MCF 10A (cell line): ENCODE measurements at regions of chr18 and their contacts with region 1.

Region 1: DNA sequence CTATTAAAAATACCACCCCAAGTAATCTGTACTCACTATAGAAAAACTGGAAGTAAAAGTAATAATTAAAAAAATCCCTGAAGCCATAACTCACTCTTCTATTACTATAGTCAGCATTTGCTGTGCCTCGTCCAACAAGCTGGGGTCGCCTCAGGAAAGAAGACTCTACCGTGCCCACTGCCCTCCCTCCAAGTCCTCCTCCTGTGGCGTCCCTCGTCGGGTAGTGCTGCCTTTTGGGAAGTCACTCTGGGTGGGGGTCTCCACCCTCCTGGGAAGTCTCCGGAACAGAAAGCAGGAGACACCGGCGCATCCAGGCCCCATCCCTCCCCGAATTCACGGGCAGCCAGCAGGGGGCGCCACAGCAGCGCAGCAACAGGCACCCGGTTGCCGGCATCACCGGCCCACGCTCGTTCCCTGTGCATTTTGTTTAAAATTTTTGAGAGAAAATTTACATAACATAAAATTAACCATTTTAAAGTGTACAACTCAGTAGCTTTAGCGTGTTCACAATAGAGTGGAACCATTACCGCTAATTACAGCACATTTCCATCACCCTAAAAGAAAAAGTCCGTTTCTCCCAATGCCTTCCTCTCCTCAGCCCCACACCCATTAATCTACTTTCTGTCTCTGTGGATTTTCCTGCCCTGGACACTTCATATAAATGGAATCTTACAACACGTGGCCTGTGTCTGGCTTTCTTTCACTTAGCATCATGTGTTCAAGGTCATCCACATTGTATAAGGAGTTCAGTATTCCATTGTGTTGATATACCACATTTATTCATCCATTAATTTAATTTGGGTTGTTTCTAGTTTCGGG is 62.2 kb downstream of the ADNP2 start:
- DNase-seq: peak; percentile 54
- H3K4me3 Mint-ChIP-seq: peak overlapping the region; percentile 5
- H3K27ac Mint-ChIP-seq: peak overlapping the region; percentile 23
- H3K4me1 Mint-ChIP-seq: peaks cover 21% of the 10 kb centered on the region
- H3K27me3 Mint-ChIP-seq: no peaks in the 10 kb centered on the region
- CTCF ChIP-seq: peak; percentile 95

Region 2: GRCh38 chr18:80096032-80096565 is 75.2 kb before region 1 on chr18:
- CTCF ChIA-PET with region 1: no interaction called
- POLR2A ChIA-PET with region 1: no interaction called
- intact Hi-C with region 1: no loop called
- DNase-seq: no peak
- H3K4me3 Mint-ChIP-seq: no peak overlapping the region
- H3K27ac Mint-ChIP-seq: no peak overlapping the region
- H3K4me1 Mint-ChIP-seq: no peaks in the 10 kb centered on the region
- H3K27me3 Mint-ChIP-seq: no peaks in the 10 kb centered on the region
- CTCF ChIP-seq: no peak

Region 3: GRCh38 chr18:80239830-80240229 is 68.6 kb after region 1 on chr18:
- CTCF ChIA-PET with region 1: interaction called, 16 read pairs
- POLR2A ChIA-PET with region 1: interaction called, 6 read pairs
- intact Hi-C with region 1: no loop called
- DNase-seq: no peak
- H3K4me3 Mint-ChIP-seq: no peak overlapping the region
- H3K27ac Mint-ChIP-seq: no peak overlapping the region
- H3K4me1 Mint-ChIP-seq: peaks cover 11% of the 10 kb centered on the region
- H3K27me3 Mint-ChIP-seq: no peaks in the 10 kb centered on the region
- CTCF ChIP-seq: no peak

Region 4: GRCh38 chr18:80245781-80246444 is 74.7 kb after region 1 on chr18:
- CTCF ChIA-PET with region 1: interaction called, 31 read pairs
- POLR2A ChIA-PET with region 1: interaction called, 6 read pairs
- intact Hi-C with region 1: no loop called
- DNase-seq: peak; percentile 51
- H3K4me3 Mint-ChIP-seq: peak overlapping the region; percentile 74
- H3K27ac Mint-ChIP-seq: no peak overlapping the region
- H3K4me1 Mint-ChIP-seq: peaks cover 27% of the 10 kb centered on the region
- H3K27me3 Mint-ChIP-seq: no peaks in the 10 kb centered on the region
- CTCF ChIP-seq: no peak

Region 5: GRCh38 chr18:80253871-80254492 is 82.7 kb after region 1 on chr18:
- CTCF ChIA-PET with region 1: interaction called, 48 read pairs
- POLR2A ChIA-PET with region 1: interaction called, 4 read pairs
- intact Hi-C with region 1: loop called (anchors 1 kb)
- DNase-seq: peak; percentile 35
- H3K4me3 Mint-ChIP-seq: no peak overlapping the region
- H3K27ac Mint-ChIP-seq: no peak overlapping the region
- H3K4me1 Mint-ChIP-seq: peaks cover 27% of the 10 kb centered on the region
- H3K27me3 Mint-ChIP-seq: no peaks in the 10 kb centered on the region
- CTCF ChIP-seq: no peak